Motor neuron (in vitro differentiated cells): ENCODE measurements at regions of chr2 and their contacts with region 1.

Region 1: DNA sequence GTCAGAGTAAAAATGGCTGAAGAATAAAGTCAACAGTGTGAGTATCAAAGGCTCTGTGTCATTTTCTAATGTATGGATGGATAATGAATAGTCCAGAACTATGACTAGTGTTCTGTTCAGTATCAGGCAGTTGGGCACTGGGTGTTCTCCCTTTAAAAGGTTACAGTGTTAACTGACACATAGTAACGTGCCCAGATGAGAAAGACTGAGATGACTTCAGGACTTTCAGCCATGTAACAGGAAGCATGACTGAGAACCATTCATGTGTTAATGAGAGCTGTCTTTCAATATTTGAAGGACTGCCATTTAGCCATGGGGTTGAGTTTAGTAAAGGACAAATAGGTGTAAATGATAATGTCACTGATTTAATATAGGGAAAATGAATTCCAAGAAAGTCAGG is 187.1 kb downstream of the GULP1 start:
- ATAC-seq: peak in 7 of 8 experiments; percentile 18 to 89 (median 66)
- H3K4me3 ChIP-seq: no peak overlapping the region
- H3K27ac ChIP-seq: no peak overlapping the region
- H3K4me1 ChIP-seq: peaks cover 0 to 2% of the 10 kb centered on the region in 2 donors

Region 2: DNA sequence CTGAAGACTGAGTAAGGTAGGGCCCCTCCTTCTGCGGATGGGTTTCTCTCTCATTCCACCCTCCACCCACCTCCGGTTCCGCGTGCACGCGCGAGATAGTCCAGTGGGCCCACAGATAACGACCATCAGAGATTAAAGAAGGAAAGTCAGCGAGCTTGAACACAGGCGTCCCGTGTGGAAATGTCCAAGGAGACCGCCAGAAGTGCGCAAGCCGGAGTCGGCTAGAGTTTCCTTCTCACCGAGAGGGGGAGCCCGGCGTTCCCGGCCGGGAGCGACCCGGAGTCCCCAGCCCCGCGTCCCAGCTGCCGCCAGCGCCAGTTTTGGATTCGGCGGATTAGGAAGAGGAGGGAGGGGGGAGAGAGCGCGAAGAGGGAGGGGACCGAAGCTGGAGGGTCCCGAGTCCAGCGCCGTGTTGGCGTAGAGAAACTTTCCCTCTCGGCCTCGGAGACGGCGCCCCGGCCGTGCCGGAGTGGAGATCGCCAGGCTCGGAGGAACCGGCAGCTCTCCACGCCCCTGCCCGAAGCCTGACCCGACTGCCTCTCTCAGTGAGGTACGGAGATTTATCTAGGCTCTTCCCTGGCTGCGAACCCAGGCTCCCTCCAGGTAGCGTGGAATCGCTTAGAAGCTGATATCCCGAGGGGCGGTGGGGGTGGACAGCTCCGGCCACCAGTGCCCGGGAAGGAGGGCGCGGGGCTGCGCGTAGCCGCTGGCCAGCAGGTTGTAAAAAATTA is 186.9 kb before region 1 on chr2 and contains the start of gene GULP1:
- in situ Hi-C with region 1: loop called in 1 of 9 experiments (anchors 25 kb)
- ATAC-seq: peak; percentile 59 to 86 (median 81)
- H3K4me3 ChIP-seq: peak within 1 kb of the TSS; percentile 54 to 72 (median 60)
- H3K27ac ChIP-seq: peak within 1 kb of the TSS in 1 of 2 donors; percentile 73
- H3K4me1 ChIP-seq: peaks cover 4 to 15% of the 10 kb centered on the region in 2 donors
- total RNA-seq, gene GULP1: 8.1 to 71.0 (median 25.7) TPM

Region 3: DNA sequence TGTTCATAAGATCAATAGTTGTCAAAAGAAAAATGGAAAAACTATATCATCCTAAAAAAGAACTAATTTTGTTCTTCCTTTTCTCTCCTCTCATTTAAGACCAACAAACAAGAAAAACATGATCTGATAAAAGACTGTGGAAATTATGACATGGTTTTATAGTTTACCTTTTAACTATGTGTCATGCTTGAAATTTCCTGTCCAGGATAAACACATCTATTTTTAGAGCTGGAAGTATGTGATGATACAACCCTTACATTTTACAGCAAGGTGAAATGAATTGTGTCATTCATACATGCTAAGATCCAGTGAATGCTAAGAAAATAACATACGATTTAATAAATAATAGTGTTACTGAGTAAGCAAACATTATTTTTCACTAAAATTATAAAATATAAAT is 97.1 kb before region 1 on chr2:
- in situ Hi-C with region 1: loop called in 1 of 9 experiments (anchors 25 kb)
- ATAC-seq: no peak
- H3K4me3 ChIP-seq: no peak overlapping the region
- H3K27ac ChIP-seq: no peak overlapping the region
- H3K4me1 ChIP-seq: no peaks in the 10 kb centered on the region